Tibial artery (tissue), 4 donors: ENCODE measurements at regions of chr7 and their contacts with region 1.

Region 1: GRCh38 chr7:67955061-67955460 is 958.4 kb downstream of the TYW1 start:
- DNase-seq: no peak
- H3K4me3 ChIP-seq: no peak overlapping the region
- H3K27ac ChIP-seq: no peak overlapping the region
- H3K4me1 ChIP-seq: no peaks in the 10 kb centered on the region
- H3K27me3 ChIP-seq: no peaks in the 10 kb centered on the region
- CTCF ChIP-seq: no peak

Region 2: DNA sequence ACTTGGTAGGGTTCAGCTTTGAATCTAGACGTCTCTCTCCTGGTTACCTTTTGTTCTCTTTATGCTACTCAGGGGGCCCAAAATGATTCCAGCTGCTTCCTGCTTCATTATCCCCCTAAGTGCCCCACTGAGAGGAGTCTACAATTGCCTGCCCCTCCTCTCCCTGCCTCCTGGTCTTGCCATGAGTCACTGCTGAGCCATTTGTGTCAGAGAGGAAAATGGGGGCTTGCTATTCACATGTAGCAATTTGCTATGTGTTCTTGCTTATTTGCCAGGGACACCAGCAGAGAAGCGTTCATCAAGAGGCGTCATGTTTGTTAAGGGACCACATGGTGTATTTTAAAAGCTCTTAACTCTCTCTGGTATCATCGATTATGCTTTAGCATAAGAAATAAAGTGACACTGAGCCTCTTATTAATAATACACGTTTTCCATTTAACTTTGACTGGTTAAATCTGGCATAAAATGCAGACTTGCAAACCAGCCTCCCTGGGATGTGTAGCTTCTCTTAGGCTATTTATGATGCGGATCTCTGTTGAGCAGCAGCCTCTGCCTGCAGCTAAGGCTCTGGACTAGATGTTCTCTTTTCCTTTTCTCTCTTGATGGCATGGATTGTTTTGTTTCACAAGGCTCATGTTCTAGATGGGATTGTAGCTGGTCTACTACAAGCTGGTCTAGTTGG is 1882.5 kb after region 1 on chr7:
- intact Hi-C with region 1: loop called (anchors 10 kb)
- DNase-seq: no peak
- H3K4me3 ChIP-seq: no peak overlapping the region
- H3K27ac ChIP-seq: no peak overlapping the region
- H3K4me1 ChIP-seq: no peaks in the 10 kb centered on the region
- H3K27me3 ChIP-seq: no peaks in the 10 kb centered on the region
- CTCF ChIP-seq: no peak